T-cell (primary cell): ENCODE measurements at regions of chr5 and their contacts with region 1.

Region 1: GRCh38 chr5:140664359-140665119 is at the start of gene WDR55:
- DNase-seq: peak; percentile 88 to 99 (median 96)
- ATAC-seq: peak; percentile 94 to 97 (median 94)
- H3K4me3 ChIP-seq: peak within 1 kb of the TSS; percentile 96 to 97
- H3K4me3 Mint-ChIP-seq: peak within 1 kb of the TSS; percentile 97 to 100 (median 98)
- H3K27ac ChIP-seq: peak within 1 kb of the TSS; percentile 97
- H3K27ac Mint-ChIP-seq: peak within 1 kb of the TSS; percentile 98
- H3K4me1 ChIP-seq: peaks cover 6 to 24% of the 10 kb centered on the region in 2 experiments
- H3K4me1 Mint-ChIP-seq: peaks cover 33 to 35% (median 33%) of the 10 kb centered on the region in 3 donors
- H3K27me3 ChIP-seq: no peaks in the 10 kb centered on the region
- H3K27me3 Mint-ChIP-seq: no peaks in the 10 kb centered on the region
- total RNA-seq, gene WDR55: 36.6 to 50.9 (median 42.9) TPM

Region 2: DNA sequence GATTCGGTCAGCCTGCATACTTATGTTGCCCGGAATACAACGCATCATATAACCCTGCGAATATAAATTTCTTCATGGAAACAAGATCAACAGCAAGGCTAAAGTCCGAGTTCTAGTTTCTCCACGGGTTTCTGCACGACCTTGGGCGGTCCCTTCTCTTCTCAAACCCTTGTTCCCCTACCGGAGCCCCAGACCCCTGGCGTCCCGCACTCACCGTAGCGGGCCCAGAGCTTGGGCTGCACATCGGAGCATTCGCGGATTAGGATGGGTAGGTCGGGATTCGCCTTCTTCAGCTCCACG is 17.5 kb before region 1 on chr5:
- CTCF ChIA-PET with region 1: interaction called in 1 of 2 experiments, 6 read pairs
- POLR2A ChIA-PET with region 1: interaction called, 7 to 16 read pairs
- DNase-seq: no peak
- ATAC-seq: no peak
- H3K4me3 ChIP-seq: peak overlapping the region; percentile 87 to 97
- H3K4me3 Mint-ChIP-seq: peak overlapping the region; percentile 90 to 99 (median 98)
- H3K27ac ChIP-seq: peak overlapping the region; percentile 88
- H3K27ac Mint-ChIP-seq: peak overlapping the region; percentile 97 to 99
- H3K4me1 ChIP-seq: peaks cover 12 to 32% of the 10 kb centered on the region in 2 experiments
- H3K4me1 Mint-ChIP-seq: peaks cover 51 to 60% (median 55%) of the 10 kb centered on the region in 3 donors
- H3K27me3 ChIP-seq: no peaks in the 10 kb centered on the region
- H3K27me3 Mint-ChIP-seq: no peaks in the 10 kb centered on the region